ENCODE measurements at regions of chr10 and their contacts with region 1.

Region 1: DNA sequence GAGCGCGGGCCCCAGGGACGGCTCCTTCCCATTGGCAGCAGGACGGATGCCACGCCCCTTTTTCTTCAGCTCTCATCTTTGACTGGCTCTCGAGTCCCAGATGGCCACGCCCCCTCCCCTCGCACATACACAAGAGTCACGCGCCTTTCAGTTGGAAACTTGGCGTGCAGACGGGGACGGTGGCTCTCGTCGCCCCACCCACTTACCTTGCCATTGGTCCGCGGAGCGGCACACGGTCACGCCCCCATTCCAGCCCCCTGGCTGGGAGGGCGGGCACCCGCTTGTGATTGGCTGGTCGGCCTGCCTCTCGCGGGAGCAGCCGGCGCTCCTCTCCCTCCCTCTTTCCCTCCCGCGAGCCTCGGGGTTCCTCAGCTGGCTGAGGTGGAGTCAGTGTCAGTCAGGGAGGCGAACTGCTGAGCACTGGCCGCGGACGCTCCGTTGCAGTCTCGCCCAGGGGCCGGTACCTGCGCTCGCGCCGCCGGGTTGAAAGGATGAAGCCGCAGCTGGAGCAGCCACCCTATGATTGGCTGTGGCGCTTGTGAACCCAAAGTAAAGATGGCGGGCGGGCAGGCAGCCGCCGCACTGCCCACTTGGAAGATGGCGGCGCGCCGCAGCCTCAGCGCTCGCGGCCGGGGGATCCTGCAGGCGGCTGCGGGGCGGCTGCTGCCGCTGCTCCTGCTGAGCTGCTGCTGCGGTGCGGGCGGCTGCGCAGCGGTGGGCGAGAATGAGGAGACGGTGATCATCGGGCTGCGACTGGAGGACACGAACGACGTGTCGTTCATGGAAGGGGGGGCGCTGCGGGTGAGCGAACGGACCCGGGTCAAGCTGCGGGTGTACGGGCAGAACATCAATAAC is at the start of gene CNNM2:
- DNase-seq: peak; percentile 100
- ATAC-seq: peak; percentile 96 to 98 (median 98)
- H3K4me3 ChIP-seq: peak within 1 kb of the TSS; percentile 98
- H3K27ac ChIP-seq: peak within 1 kb of the TSS; percentile 92
- H3K4me1 ChIP-seq: peaks cover 34% of the 10 kb centered on the region
- H3K27me3 ChIP-seq: no peaks in the 10 kb centered on the region
- CTCF ChIP-seq: no peak
- total RNA-seq, gene CNNM2: 0.49 to 2.6 (median 1.6) TPM

Region 2: DNA sequence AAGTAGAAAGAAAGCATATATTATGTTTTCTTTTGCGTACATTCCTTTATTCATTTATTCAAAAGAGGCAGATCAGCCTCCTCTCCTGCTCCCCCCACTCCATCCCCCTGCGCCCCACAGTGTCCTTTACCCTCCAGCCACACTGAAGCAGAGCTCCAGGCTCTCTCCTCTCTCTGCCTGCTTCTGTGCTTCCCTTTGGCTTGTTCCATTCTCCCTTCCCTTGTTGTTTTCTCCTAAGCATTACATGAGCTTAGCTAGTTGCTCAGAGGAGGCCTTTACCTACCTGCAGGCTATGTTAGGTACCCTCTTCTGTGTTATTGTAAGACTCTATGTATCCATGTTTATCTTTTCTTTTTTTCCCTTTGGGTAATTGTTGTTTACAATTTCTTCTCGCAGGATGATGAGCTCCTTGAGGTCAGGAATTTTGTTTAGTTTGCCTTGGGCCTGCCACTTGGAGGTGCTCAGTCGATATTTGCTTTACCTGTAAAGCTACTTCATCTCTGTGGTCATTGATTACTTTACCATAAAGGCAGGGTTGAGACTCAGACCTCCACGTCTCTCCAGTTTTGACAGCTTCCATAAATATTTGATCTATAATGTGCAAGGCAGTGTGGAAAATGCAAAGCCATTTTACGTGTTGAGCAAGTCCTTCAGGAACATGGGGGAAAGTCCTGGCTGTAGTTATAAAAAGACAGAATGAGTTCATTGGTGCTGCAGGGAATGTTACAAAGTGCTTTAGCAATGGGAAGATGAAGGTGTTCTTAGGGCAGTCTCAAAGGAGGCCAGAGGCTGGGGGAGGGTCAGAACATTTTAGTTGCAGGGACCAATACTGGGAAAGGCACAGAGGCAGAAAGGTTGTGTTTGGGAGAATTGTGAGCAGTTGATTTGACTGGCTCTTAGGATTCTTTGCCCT is 27.5 kb after region 1 on chr10:
- intact Hi-C with region 1: no loop called
- DNase-seq: no peak
- ATAC-seq: no peak
- H3K4me3 ChIP-seq: no peak overlapping the region
- H3K27ac ChIP-seq: no peak overlapping the region
- H3K4me1 ChIP-seq: no peaks in the 10 kb centered on the region
- H3K27me3 ChIP-seq: no peaks in the 10 kb centered on the region
- CTCF ChIP-seq: no peak

Region 3: DNA sequence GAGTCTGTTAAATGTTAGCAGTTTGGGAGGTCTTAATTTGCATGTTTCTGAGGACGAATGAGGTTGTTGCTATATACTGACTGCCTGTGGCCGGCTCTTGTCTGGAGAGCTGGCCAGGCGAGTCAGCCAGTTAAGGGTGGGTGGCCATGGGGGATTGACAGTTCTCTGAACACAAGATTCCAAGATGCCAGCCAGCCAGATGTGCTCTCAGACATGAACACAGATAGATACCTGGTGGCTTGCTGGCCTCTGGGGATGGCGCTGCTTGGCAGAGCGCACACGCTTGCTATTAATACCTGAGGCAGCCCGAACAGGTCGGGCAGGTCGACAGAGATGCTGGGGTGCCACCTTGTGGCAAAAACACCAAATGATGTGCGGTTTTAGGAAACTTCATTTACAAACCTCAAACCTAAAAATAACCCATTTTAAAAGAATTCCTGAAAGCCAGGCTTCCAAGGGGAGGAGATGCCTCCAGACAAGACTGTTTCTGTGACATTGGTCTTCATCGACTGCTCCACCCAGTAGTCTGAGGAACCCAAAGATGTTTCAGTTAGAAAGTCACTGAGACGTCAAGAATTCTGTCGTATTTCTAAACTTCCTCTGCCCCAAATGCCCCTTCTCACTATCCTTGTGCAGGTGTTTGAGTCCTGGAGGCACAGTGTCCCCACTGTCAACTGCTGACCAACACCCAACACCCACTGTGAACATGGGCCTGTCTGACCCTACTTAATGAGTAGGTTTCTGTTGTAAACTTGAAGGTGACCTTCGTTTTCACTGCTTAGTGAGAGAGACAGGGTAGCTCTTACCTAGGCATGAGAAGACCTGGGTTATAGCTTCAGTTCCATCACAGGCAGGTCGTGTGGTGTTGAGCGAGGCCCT is 151.5 kb after region 1 on chr10:
- intact Hi-C with region 1: loop called (anchors 2 to 5 kb)
- DNase-seq: peak; percentile 30 to 65
- ATAC-seq: peak; percentile 74 to 81 (median 78)
- H3K4me3 ChIP-seq: no peak overlapping the region
- H3K27ac ChIP-seq: no peak overlapping the region
- H3K4me1 ChIP-seq: no peaks in the 10 kb centered on the region
- H3K27me3 ChIP-seq: no peaks in the 10 kb centered on the region
- CTCF ChIP-seq: peak; percentile 62

Region 4: DNA sequence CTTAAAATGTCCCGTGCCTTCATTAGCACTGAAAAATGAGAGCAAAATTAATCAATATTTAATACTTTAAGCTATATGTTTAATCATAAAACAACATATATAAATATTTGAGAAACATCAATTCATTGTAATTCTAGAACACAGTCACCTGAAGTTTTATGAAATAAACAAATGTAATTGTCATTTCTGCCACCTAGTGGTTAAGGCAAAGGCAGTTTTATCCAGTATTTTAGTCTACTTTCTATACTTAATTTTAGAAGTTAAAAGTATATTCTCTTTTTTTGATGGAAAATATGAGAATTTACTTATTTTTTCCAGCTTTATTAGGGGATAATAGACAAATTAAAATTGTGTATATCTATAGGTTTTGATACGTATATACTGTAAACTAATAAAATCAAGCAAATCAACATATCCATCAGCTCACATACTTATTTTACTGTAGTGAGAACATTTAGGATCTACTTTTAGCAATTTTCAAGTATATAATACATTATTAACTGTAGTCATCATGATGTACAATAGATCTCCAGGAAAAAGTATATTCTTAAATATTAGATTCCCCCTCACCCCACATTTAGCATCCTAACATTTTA is 415.8 kb after region 1 on chr10:
- intact Hi-C with region 1: loop called (anchors 2 to 5 kb)
- DNase-seq: no peak
- ATAC-seq: no peak
- H3K4me3 ChIP-seq: no peak overlapping the region
- H3K27ac ChIP-seq: no peak overlapping the region
- H3K4me1 ChIP-seq: no peaks in the 10 kb centered on the region
- H3K27me3 ChIP-seq: no peaks in the 10 kb centered on the region
- CTCF ChIP-seq: peak; percentile 67